B cell (primary cell): ENCODE measurements at regions of chr2 and their contacts with region 1.

Region 1: DNA sequence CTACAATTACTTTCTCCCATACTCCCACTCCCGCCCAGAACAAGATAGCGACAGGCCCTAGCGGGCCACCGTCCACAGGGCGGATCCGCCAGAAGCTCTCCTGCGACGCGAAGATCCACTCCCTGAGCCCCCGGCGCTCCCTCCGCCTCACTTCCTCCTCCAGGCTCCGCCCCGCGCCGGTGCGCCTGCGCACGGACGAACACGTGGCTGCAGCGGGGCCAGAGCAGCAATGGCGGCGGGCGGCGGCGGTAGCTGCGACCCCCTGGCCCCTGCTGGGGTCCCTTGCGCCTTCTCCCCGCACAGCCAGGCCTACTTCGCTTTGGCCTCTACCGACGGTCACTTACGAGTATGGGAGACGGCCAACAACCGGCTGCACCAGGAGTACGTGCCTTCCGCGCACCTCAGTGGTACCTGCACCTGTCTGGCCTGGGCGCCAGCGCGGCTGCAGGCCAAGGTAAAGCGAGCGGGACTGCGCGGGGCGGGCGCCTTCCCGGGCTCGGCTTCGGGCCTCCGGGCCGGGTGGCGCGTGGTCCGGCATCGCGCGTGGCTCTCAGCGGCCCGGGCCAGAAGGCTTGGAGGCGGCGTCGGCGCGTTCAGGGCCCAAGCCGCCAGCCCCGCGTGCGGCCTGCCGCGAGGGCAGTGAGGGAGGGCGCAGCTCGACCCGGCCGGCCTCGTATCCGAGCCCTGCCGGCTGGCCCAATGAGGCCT is at the start of gene WDR43:
- DNase-seq: peak; percentile 98
- ATAC-seq: peak; percentile 97
- H3K4me3 ChIP-seq: peak within 1 kb of the TSS; percentile 64 to 89 (median 84)
- H3K4me3 Mint-ChIP-seq: peak within 1 kb of the TSS; percentile 92
- H3K27ac ChIP-seq: peak within 1 kb of the TSS; percentile 71 to 81
- H3K27ac Mint-ChIP-seq: peak within 1 kb of the TSS; percentile 94
- H3K4me1 ChIP-seq: peaks cover 26 to 30% of the 10 kb centered on the region in 2 donors
- H3K4me1 Mint-ChIP-seq: peaks cover 43% of the 10 kb centered on the region
- H3K27me3 ChIP-seq: no peaks in the 10 kb centered on the region
- H3K27me3 Mint-ChIP-seq: no peaks in the 10 kb centered on the region
- CTCF ChIP-seq: no peak
- total RNA-seq, gene WDR43: 48.6 and 51.0 TPM in 2 replicates

Region 2: GRCh38 chr2:28674062-28674712 is 220.4 kb before region 1 on chr2:
- CTCF ChIA-PET with region 1: no interaction called
- POLR2A ChIA-PET with region 1: no interaction called
- intact Hi-C with region 1: no loop called
- DNase-seq: no peak
- ATAC-seq: no peak
- H3K4me3 ChIP-seq: no peak overlapping the region
- H3K4me3 Mint-ChIP-seq: no peak overlapping the region
- H3K27ac ChIP-seq: no peak overlapping the region
- H3K27ac Mint-ChIP-seq: no peak overlapping the region
- H3K4me1 ChIP-seq: no peaks in the 10 kb centered on the region
- H3K4me1 Mint-ChIP-seq: no peaks in the 10 kb centered on the region
- H3K27me3 ChIP-seq: no peaks in the 10 kb centered on the region
- H3K27me3 Mint-ChIP-seq: no peaks in the 10 kb centered on the region
- CTCF ChIP-seq: no peak

Region 3: DNA sequence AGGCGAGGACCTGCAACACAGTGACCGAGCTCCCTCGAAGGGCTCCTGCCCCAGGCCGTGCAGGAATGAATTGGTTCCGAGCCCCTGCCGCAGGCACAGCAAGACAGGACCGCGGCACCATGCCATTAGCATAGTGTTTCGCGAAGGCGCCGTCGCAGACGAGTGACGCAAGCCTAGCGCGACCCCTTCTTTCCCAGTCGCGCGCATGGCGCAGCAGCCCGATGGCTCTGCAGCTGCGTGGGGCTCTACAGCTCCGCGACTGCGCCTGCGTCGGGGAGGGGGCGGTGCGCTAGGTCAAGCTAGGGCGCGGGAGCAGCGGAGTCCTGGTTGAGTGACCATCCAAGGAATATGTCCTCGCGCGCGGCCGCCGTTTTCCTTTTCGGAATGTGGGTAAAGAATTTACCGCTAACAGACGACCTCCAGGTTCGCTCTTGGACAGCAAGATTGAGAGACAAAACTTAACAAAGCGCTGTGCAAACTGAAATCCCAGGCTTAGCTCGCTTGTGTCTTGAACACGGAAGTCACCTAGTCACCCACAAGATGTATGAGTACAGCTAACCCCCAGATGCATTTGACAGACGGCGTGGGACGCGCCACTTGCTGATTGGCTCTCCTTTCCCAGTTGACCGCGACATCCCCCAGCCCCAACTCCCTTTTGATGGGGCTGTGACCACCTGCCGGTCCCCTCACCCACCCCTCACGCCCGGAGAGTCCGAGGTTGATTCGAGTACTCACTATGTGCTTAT is 24.3 kb before region 1 on chr2 and contains the start of gene TRMT61B:
- CTCF ChIA-PET with region 1: interaction called, 10 read pairs
- POLR2A ChIA-PET with region 1: interaction called, 35 read pairs
- intact Hi-C with region 1: loop called (anchors 1 kb)
- DNase-seq: peak; percentile 98
- ATAC-seq: peak; percentile 96
- H3K4me3 ChIP-seq: peak within 1 kb of the TSS; percentile 71 to 92 (median 90)
- H3K4me3 Mint-ChIP-seq: peak within 1 kb of the TSS; percentile 99
- H3K27ac ChIP-seq: peak within 1 kb of the TSS; percentile 85 to 94
- H3K27ac Mint-ChIP-seq: peak within 1 kb of the TSS; percentile 100
- H3K4me1 ChIP-seq: peaks cover 20 to 23% of the 10 kb centered on the region in 2 donors
- H3K4me1 Mint-ChIP-seq: peaks cover 29% of the 10 kb centered on the region
- H3K27me3 ChIP-seq: peaks cover 0 to 6% (median 0%) of the 10 kb centered on the region in 4 experiments
- H3K27me3 Mint-ChIP-seq: peaks cover 2% of the 10 kb centered on the region
- CTCF ChIP-seq: no peak
- total RNA-seq, gene TRMT61B: 20.3 and 23.0 TPM in 2 replicates